Activated CD8-positive, alpha-beta T cell treated with anti-CD3 and anti-CD28 coated beads for 36 hours (primary cell): ENCODE measurements at regions of chr14 and their contacts with region 1.

Region 1: GRCh38 chr14:76918751-76919543 is 92.7 kb downstream of the LRRC74A start:
- DNase-seq: peak; percentile 42
- ATAC-seq: no peak
- H3K4me3 Mint-ChIP-seq: peak overlapping the region; percentile 34
- H3K27ac Mint-ChIP-seq: peak overlapping the region; percentile 43
- H3K4me1 Mint-ChIP-seq: peaks cover 46% of the 10 kb centered on the region
- H3K27me3 Mint-ChIP-seq: no peaks in the 10 kb centered on the region
- CTCF ChIP-seq: no peak

Region 2: GRCh38 chr14:76669770-76670169 is 249.2 kb before region 1 on chr14:
- CTCF ChIA-PET with region 1: no interaction called
- POLR2A ChIA-PET with region 1: no interaction called
- intact Hi-C with region 1: no loop called
- DNase-seq: no peak
- ATAC-seq: no peak
- H3K4me3 Mint-ChIP-seq: no peak overlapping the region
- H3K27ac Mint-ChIP-seq: no peak overlapping the region
- H3K4me1 Mint-ChIP-seq: no peaks in the 10 kb centered on the region
- H3K27me3 Mint-ChIP-seq: peaks cover 7% of the 10 kb centered on the region
- CTCF ChIP-seq: no peak

Region 3: DNA sequence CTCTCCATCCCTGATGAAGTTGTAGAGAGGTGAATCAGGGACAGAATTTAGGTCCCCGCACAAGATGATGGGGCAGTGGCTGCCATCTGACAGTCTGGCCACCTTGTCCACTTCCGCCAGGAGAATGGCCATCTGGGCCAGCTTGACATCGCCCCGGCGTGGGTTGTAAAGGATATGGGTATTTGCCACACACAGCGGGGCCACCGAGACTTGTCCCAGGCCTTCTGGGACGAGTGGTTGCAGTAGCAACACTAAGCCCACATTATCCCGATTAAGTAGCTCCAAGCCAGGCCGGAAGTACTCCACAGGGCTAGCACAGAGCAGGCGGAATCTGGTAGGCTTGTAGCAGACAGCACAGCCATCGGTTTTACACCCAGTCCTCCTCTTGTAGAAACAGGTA is 112.5 kb before region 1 on chr14:
- CTCF ChIA-PET with region 1: no interaction called
- POLR2A ChIA-PET with region 1: no interaction called
- intact Hi-C with region 1: no loop called
- DNase-seq: no peak
- ATAC-seq: no peak
- H3K4me3 Mint-ChIP-seq: no peak overlapping the region
- H3K27ac Mint-ChIP-seq: no peak overlapping the region
- H3K4me1 Mint-ChIP-seq: peaks cover 23% of the 10 kb centered on the region
- H3K27me3 Mint-ChIP-seq: no peaks in the 10 kb centered on the region
- CTCF ChIP-seq: no peak

Region 4: GRCh38 chr14:76929927-76930326 is 11.0 kb after region 1 on chr14:
- CTCF ChIA-PET with region 1: interaction called, 13 read pairs
- POLR2A ChIA-PET with region 1: no interaction called
- intact Hi-C with region 1: no loop called
- DNase-seq: peak; percentile 76
- ATAC-seq: peak; percentile 87
- H3K4me3 Mint-ChIP-seq: peak overlapping the region; percentile 47
- H3K27ac Mint-ChIP-seq: peak overlapping the region; percentile 67
- H3K4me1 Mint-ChIP-seq: peaks cover 57% of the 10 kb centered on the region
- H3K27me3 Mint-ChIP-seq: no peaks in the 10 kb centered on the region
- CTCF ChIP-seq: no peak

Region 5: GRCh38 chr14:76947078-76947837 is 28.3 kb after region 1 on chr14:
- CTCF ChIA-PET with region 1: interaction called, 35 read pairs
- POLR2A ChIA-PET with region 1: interaction called, 3 read pairs
- intact Hi-C with region 1: no loop called
- DNase-seq: peak; percentile 92
- ATAC-seq: peak; percentile 92
- H3K4me3 Mint-ChIP-seq: no peak overlapping the region
- H3K27ac Mint-ChIP-seq: peak overlapping the region; percentile 79
- H3K4me1 Mint-ChIP-seq: peaks cover 41% of the 10 kb centered on the region
- H3K27me3 Mint-ChIP-seq: no peaks in the 10 kb centered on the region
- CTCF ChIP-seq: peak; percentile 45

Region 6: GRCh38 chr14:76962303-76962660 is 43.3 kb after region 1 on chr14:
- CTCF ChIA-PET with region 1: interaction called, 22 read pairs
- POLR2A ChIA-PET with region 1: interaction called, 7 read pairs
- intact Hi-C with region 1: loop called (anchors 5 kb)
- DNase-seq: peak; percentile 14
- ATAC-seq: peak; percentile 4
- H3K4me3 Mint-ChIP-seq: peak overlapping the region; percentile 75
- H3K27ac Mint-ChIP-seq: peak overlapping the region; percentile 100
- H3K4me1 Mint-ChIP-seq: peaks cover 88% of the 10 kb centered on the region
- H3K27me3 Mint-ChIP-seq: peaks cover 2% of the 10 kb centered on the region
- CTCF ChIP-seq: no peak

Region 7: DNA sequence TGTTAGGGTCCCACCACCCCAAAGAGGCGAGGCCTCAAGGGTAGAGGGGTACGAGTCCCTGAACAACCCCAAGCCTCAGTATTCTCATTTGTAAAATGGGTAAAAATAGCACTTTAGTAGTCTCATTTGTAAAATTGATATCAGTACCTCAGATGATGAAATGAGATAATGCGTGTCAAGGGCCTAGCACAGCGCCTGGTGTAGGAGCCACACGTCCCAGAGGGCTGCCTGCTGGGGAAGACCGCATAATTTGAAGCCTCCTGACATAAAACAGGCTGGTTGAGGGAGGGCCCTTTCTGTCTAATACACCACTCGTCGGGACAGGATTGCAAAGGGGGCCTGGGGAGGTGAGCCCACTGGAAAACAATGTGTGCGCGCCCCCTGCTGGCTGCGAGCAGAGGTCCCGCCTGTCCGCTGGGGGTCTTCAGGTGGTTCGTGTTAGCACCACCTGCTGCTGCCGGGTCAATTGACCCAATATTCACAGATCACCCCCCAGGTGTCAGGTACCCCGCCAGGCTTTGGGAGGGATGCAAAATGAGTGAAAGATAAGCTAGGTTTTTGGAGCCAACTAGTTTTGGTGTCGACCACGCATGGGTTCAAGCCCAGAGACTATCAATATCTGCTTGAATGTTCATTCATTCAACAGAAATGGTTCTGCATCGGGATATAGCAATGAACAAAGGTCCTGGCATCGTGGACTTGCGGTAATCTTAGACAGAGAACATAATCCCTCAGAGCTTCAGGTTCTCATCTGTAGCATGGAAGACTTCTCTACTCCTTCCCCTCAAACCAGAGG is 134.3 kb after region 1 on chr14:
- CTCF ChIA-PET with region 1: interaction called, 103 read pairs
- POLR2A ChIA-PET with region 1: no interaction called
- intact Hi-C with region 1: no loop called
- DNase-seq: peak; percentile 90
- ATAC-seq: peak; percentile 93
- H3K4me3 Mint-ChIP-seq: no peak overlapping the region
- H3K27ac Mint-ChIP-seq: peak overlapping the region; percentile 75
- H3K4me1 Mint-ChIP-seq: peaks cover 17% of the 10 kb centered on the region
- H3K27me3 Mint-ChIP-seq: no peaks in the 10 kb centered on the region
- CTCF ChIP-seq: peak; percentile 100